MCF 10A (cell line): ENCODE measurements at regions of chr10 and their contacts with region 1.

Region 1: GRCh38 chr10:44932517-44933450 is 21.6 kb downstream of the TMEM72 start:
- DNase-seq: peak; percentile 75
- H3K4me3 Mint-ChIP-seq: no peak overlapping the region
- H3K27ac Mint-ChIP-seq: no peak overlapping the region
- H3K4me1 Mint-ChIP-seq: peaks cover 6% of the 10 kb centered on the region
- H3K27me3 Mint-ChIP-seq: peaks cover 18% of the 10 kb centered on the region
- CTCF ChIP-seq: peak; percentile 96

Region 2: GRCh38 chr10:44920252-44920651 is 12.5 kb before region 1 on chr10:
- CTCF ChIA-PET with region 1: interaction called, 18 read pairs
- POLR2A ChIA-PET with region 1: no interaction called
- intact Hi-C with region 1: no loop called
- DNase-seq: no peak
- H3K4me3 Mint-ChIP-seq: no peak overlapping the region
- H3K27ac Mint-ChIP-seq: no peak overlapping the region
- H3K4me1 Mint-ChIP-seq: no peaks in the 10 kb centered on the region
- H3K27me3 Mint-ChIP-seq: peaks cover 47% of the 10 kb centered on the region
- CTCF ChIP-seq: no peak

Region 3: GRCh38 chr10:44952779-44953231 is 20.0 kb after region 1 on chr10:
- CTCF ChIA-PET with region 1: interaction called, 28 read pairs
- POLR2A ChIA-PET with region 1: interaction called, 5 read pairs
- intact Hi-C with region 1: no loop called
- DNase-seq: no peak
- H3K4me3 Mint-ChIP-seq: no peak overlapping the region
- H3K27ac Mint-ChIP-seq: no peak overlapping the region
- H3K4me1 Mint-ChIP-seq: no peaks in the 10 kb centered on the region
- H3K27me3 Mint-ChIP-seq: no peaks in the 10 kb centered on the region
- CTCF ChIP-seq: no peak

Region 4: GRCh38 chr10:44974628-44975431 is 42.0 kb after region 1 on chr10:
- CTCF ChIA-PET with region 1: interaction called, 22 read pairs
- POLR2A ChIA-PET with region 1: interaction called, 3 read pairs
- intact Hi-C with region 1: loop called (anchors 1 kb)
- DNase-seq: peak; percentile 60
- H3K4me3 Mint-ChIP-seq: peak overlapping the region; percentile 58
- H3K27ac Mint-ChIP-seq: peak overlapping the region; percentile 61
- H3K4me1 Mint-ChIP-seq: peaks cover 25% of the 10 kb centered on the region
- H3K27me3 Mint-ChIP-seq: no peaks in the 10 kb centered on the region
- CTCF ChIP-seq: peak; percentile 98

Region 5: GRCh38 chr10:45235798-45236231 is 303.0 kb after region 1 on chr10:
- CTCF ChIA-PET with region 1: interaction called, 10 read pairs
- POLR2A ChIA-PET with region 1: no interaction called
- intact Hi-C with region 1: loop called (anchors 10 kb)
- DNase-seq: peak; percentile 34
- H3K4me3 Mint-ChIP-seq: no peak overlapping the region
- H3K27ac Mint-ChIP-seq: no peak overlapping the region
- H3K4me1 Mint-ChIP-seq: no peaks in the 10 kb centered on the region
- H3K27me3 Mint-ChIP-seq: no peaks in the 10 kb centered on the region
- CTCF ChIP-seq: no peak